Transverse colon (tissue), 4 donors: ENCODE measurements at regions of chr18 and their contacts with region 1.

Region 1: DNA sequence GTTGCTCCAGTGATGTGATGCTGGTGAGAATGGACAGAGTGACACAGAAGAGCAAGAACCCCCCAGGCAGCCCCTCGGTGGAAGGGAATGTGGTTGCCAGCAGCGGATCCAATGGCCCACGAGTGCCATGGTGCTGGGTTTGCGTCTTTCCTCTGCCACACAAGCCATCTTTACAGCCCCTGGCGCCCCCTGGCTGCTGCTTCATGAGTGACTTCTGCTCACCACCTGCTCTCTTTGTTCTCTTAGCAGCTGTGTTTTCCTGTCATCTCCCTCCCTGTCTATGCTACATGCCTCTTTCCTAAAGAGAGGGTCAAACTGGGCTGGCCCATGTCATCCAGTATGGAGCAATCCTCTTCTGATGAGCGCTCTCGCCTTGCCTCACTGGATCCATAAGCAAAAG is 300.0 kb upstream of the SMIM21 start:
- DNase-seq: peak; percentile 14
- H3K4me3 ChIP-seq: no peak overlapping the region
- H3K27ac ChIP-seq: no peak overlapping the region
- H3K4me1 ChIP-seq: no peaks in the 10 kb centered on the region
- H3K27me3 ChIP-seq: no peaks in the 10 kb centered on the region
- CTCF ChIP-seq: peak in 3 of 5 experiments; percentile 13 to 24 (median 23)
- EP300 ChIP-seq: no peak
- POLR2A ChIP-seq: no peak

Region 2: GRCh38 chr18:75638776-75639471 is 88.5 kb before region 1 on chr18:
- in situ Hi-C with region 1: loop called in 1 of 4 experiments (anchors 25 kb)
- intact Hi-C with region 1: no loop called
- DNase-seq: no peak
- H3K4me3 ChIP-seq: peak overlapping the region in 2 of 4 donors; percentile 12 to 18
- H3K27ac ChIP-seq: peak overlapping the region; percentile 42 to 79 (median 68)
- H3K4me1 ChIP-seq: peaks cover 0 to 12% (median 3%) of the 10 kb centered on the region in 4 donors
- H3K27me3 ChIP-seq: no peaks in the 10 kb centered on the region
- CTCF ChIP-seq: no peak
- EP300 ChIP-seq: no peak
- POLR2A ChIP-seq: no peak

Region 3: GRCh38 chr18:75884728-75885127 is 157.3 kb after region 1 on chr18:
- in situ Hi-C with region 1: no loop called
- intact Hi-C with region 1: no loop called
- DNase-seq: no peak
- H3K4me3 ChIP-seq: no peak overlapping the region
- H3K27ac ChIP-seq: no peak overlapping the region
- H3K4me1 ChIP-seq: no peaks in the 10 kb centered on the region
- H3K27me3 ChIP-seq: no peaks in the 10 kb centered on the region
- CTCF ChIP-seq: no peak
- EP300 ChIP-seq: no peak
- POLR2A ChIP-seq: no peak

Region 4: DNA sequence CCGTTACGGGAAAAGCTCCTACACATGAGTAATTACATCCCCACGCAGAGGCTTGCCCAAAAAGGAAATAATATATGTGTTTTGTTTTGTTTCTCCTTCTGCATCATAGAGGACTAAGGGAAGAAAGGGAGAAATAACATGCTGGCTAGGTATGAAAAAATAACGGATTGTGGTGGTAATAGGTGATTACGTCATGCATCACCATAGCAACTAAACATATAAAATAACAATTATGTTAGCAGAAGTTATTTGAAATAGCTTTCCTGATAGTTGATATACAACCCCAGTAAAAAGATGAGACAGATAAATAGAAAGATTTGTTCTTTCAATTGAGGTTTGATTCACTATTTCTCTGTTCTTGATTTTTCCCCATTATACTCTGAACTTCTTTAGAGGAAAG is 249.6 kb after region 1 on chr18:
- in situ Hi-C with region 1: no loop called
- intact Hi-C with region 1: no loop called
- DNase-seq: no peak
- H3K4me3 ChIP-seq: no peak overlapping the region
- H3K27ac ChIP-seq: no peak overlapping the region
- H3K4me1 ChIP-seq: no peaks in the 10 kb centered on the region
- H3K27me3 ChIP-seq: no peaks in the 10 kb centered on the region
- CTCF ChIP-seq: no peak
- EP300 ChIP-seq: no peak
- POLR2A ChIP-seq: no peak